ENCODE measurements at regions of chr4 and their contacts with region 1.

Region 1: DNA sequence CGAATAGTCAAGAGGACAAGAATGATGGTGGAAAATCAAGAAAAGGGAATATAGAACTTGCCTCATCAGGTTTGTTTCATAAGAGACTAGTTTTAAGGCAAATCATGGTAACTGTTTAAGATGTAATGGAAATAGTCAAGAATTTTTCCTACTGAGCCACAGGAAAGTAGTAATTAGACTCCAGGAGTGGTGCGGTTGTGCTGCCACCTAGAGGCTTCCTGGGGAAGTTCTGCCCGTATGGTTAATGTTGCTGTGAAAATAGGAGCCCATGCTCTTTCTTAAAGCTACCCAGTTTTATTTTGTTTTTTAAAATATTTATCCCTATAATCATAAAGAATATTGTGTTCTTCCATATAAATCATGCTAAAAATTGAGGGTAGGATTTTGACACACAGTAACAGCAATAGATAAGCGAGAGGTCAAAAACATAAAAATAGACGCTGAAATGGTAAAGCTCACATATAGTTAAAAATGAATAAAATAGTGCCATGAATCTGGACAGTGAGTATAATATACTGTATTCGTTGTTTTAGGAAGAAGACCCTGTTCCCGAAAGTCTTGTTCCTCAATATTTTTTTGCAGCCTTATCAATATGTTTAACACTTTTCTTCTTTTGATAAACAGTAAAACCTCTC is 87.0 kb downstream of the PHOX2B start:
- DNase-seq: peak in 4 of 9 donors; percentile 5 to 33 (median 16)
- ATAC-seq: no peak
- H3K4me3 ChIP-seq: no peak overlapping the region
- H3K4me3 Mint-ChIP-seq: no peak overlapping the region
- H3K27ac ChIP-seq: no peak overlapping the region
- H3K27ac Mint-ChIP-seq: no peak overlapping the region
- H3K4me1 ChIP-seq: no peaks in the 10 kb centered on the region
- H3K4me1 Mint-ChIP-seq: no peaks in the 10 kb centered on the region
- H3K27me3 ChIP-seq: no peaks in the 10 kb centered on the region
- H3K27me3 Mint-ChIP-seq: peaks cover 0 to 25% (median 13%) of the 10 kb centered on the region in 5 donors

Region 2: DNA sequence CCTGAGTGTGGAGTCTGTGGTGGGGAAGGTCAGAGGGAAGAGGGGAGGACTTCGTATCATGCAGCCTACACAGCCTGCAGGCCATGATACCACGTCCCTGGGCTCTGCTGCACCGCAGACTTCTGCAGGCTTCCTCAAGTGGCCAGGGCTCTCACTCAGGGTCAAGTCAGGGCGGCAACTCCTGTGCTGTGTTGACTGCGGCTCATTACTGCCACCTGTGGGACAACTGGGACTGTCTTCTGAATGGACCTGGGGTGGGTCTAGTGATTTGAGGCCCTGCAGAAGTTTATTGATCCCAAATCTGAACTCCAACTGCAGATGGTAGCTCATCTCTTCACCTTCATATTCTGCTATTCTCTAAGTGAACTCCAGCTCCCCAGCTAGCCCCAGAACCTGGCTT is 744.7 kb before region 1 on chr4:
- CTCF ChIA-PET with region 1: no interaction called
- POLR2A ChIA-PET with region 1: no interaction called
- intact Hi-C with region 1: no loop called
- DNase-seq: peak in 1 of 9 donors; percentile 49
- ATAC-seq: peak; percentile 54
- H3K4me3 ChIP-seq: no peak overlapping the region
- H3K4me3 Mint-ChIP-seq: no peak overlapping the region
- H3K27ac ChIP-seq: no peak overlapping the region
- H3K27ac Mint-ChIP-seq: no peak overlapping the region
- H3K4me1 ChIP-seq: no peaks in the 10 kb centered on the region
- H3K4me1 Mint-ChIP-seq: peaks cover 0 to 18% (median 0%) of the 10 kb centered on the region in 7 donors
- H3K27me3 ChIP-seq: no peaks in the 10 kb centered on the region
- H3K27me3 Mint-ChIP-seq: no peaks in the 10 kb centered on the region

Region 3: GRCh38 chr4:40976343-40976742 is 685.2 kb before region 1 on chr4:
- CTCF ChIA-PET with region 1: no interaction called
- POLR2A ChIA-PET with region 1: no interaction called
- intact Hi-C with region 1: loop called in 1 of 2 experiments (anchors 5 kb)
- DNase-seq: no peak
- ATAC-seq: no peak
- H3K4me3 ChIP-seq: no peak overlapping the region
- H3K4me3 Mint-ChIP-seq: no peak overlapping the region
- H3K27ac ChIP-seq: no peak overlapping the region
- H3K27ac Mint-ChIP-seq: no peak overlapping the region
- H3K4me1 ChIP-seq: no peaks in the 10 kb centered on the region
- H3K4me1 Mint-ChIP-seq: no peaks in the 10 kb centered on the region
- H3K27me3 ChIP-seq: no peaks in the 10 kb centered on the region
- H3K27me3 Mint-ChIP-seq: peaks cover 2 to 25% (median 14%) of the 10 kb centered on the region in 5 donors